ENCODE measurements at regions of chr11 and their contacts with region 1.

Region 1: DNA sequence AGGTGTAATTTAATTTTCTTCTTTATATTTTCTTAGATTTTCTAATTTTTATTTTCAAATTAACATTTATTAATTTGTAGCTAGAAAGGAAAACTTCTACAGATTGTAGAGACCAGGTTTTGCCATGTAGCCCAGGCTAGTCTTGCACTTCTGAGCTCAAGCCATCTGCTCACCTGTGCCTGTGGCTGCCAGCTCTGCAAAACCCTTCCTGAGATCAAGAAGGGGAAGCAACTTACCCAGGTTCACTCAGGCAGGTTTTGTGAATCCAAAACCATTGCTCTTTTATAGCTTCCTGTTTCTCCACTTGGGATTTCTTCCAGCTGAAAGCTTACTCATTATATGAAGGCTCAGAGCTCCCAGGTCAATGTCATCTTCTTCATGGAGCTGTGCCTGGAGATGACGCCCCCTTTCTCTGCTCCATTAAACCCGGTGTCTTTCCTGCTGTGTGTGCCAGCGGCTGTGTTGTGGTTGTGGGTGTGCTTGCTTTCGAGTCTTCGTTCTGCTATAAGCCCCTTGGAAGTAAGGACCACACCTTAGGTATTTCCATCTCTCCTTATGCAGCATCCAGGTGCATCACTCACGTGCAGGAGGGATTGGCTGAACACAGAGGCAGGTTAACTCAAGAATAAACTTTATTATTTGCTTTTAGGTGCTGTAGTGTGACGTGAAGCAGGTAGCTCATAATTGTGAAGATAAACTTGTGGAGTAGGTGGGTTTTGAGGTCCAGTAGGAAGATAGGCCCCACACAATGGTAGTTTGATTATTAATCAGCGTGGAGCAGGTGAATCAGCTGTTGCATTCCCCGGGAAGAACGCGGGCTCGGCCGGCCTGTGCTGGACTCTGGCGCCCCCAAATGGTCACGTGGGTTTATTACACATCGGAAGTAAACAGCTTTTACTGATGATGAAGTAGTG is 42.2 kb upstream of the INCENP start:
- DNase-seq: peak; percentile 83
- ATAC-seq: peak; percentile 85
- H3K4me3 Mint-ChIP-seq: peak overlapping the region; percentile 20
- H3K27ac Mint-ChIP-seq: no peak overlapping the region
- H3K4me1 Mint-ChIP-seq: peaks cover 8% of the 10 kb centered on the region
- H3K27me3 Mint-ChIP-seq: peaks cover 6% of the 10 kb centered on the region

Region 2: DNA sequence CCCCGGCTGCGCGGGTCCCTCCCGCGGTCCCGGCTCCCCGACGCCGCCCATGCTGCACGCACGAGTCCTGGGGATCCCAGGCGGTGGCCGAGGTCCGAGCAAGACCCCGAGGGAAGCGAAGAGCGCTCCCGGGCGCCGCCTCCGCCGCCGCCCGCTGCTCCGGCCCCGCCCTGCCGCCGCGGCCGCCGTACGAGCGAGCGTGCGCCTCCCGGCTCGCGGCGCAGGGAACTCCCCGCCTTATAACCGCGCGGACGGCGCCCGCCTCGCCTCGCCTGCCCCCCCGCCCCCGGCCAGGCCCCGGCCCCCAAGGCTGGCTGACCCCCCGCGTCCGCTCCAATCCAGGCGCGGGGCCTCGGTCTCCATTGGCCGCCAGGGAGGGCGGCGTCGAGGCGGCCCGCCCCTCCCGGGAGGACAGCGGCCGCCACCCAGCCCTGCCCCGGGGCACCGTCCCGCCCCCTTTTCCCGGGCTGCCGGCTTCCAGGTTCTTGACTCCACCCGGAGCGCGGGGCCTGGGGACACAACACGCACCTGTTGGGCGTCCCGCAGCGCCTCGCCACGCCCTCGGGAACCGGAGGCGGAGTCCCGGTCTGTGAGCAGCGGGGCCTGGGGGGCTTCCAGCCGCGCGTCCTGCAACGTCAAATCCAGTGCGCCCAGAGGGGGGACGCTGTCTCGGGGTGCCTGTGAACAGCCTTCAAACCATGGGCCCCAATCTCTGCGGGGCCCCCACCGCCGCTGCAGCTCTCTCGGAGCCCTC is 190.1 kb before region 1 on chr11 and contains the start of gene FADS3:
- CTCF ChIA-PET with region 1: interaction called, 260 read pairs
- DNase-seq: peak; percentile 66
- ATAC-seq: peak; percentile 87
- H3K4me3 Mint-ChIP-seq: peak within 1 kb of the TSS; percentile 77
- H3K27ac Mint-ChIP-seq: no peak within 1 kb of the TSS
- H3K4me1 Mint-ChIP-seq: peaks cover 3% of the 10 kb centered on the region
- H3K27me3 Mint-ChIP-seq: peaks cover 9% of the 10 kb centered on the region
- total RNA-seq, gene FADS3: 2.6 to 7.7 TPM

Region 3: DNA sequence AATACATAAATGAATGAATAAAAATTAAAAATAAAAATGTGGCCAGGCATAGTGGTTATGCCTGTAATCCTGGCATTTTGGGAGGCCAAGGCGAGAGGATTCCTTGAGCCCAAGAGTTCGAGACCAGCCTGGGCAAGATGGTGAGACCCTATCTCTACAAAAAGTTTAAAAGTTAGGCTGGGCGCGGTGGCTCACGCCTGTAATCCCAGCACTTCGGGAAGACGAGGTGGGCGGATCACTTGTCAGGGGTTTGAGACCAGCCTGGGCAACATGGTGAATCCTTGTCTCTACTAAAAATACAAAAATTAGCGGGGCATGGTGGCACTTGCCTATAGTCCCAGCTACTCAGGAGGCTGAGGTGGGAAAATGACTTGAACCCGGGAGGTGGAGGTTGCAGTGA is 141.2 kb before region 1 on chr11:
- CTCF ChIA-PET with region 1: interaction called, 86 read pairs
- DNase-seq: no peak
- ATAC-seq: no peak
- H3K4me3 Mint-ChIP-seq: no peak overlapping the region
- H3K27ac Mint-ChIP-seq: no peak overlapping the region
- H3K4me1 Mint-ChIP-seq: no peaks in the 10 kb centered on the region
- H3K27me3 Mint-ChIP-seq: peaks cover 31% of the 10 kb centered on the region

Region 4: GRCh38 chr11:61967116-61967923 is 114.3 kb before region 1 on chr11 and contains the start of gene FTH1:
- CTCF ChIA-PET with region 1: interaction called, 35 read pairs
- DNase-seq: peak; percentile 91
- ATAC-seq: peak; percentile 79
- H3K4me3 Mint-ChIP-seq: peak within 1 kb of the TSS; percentile 88
- H3K27ac Mint-ChIP-seq: peak within 1 kb of the TSS; percentile 94
- H3K4me1 Mint-ChIP-seq: peaks cover 59% of the 10 kb centered on the region
- H3K27me3 Mint-ChIP-seq: no peaks in the 10 kb centered on the region
- total RNA-seq, gene FTH1: 740 to 867 TPM

Region 5: GRCh38 chr11:62050716-62051115 is 30.9 kb before region 1 on chr11:
- CTCF ChIA-PET with region 1: interaction called, 11 read pairs
- DNase-seq: no peak
- ATAC-seq: no peak
- H3K4me3 Mint-ChIP-seq: no peak overlapping the region
- H3K27ac Mint-ChIP-seq: no peak overlapping the region
- H3K4me1 Mint-ChIP-seq: no peaks in the 10 kb centered on the region
- H3K27me3 Mint-ChIP-seq: peaks cover 5% of the 10 kb centered on the region

Region 6: DNA sequence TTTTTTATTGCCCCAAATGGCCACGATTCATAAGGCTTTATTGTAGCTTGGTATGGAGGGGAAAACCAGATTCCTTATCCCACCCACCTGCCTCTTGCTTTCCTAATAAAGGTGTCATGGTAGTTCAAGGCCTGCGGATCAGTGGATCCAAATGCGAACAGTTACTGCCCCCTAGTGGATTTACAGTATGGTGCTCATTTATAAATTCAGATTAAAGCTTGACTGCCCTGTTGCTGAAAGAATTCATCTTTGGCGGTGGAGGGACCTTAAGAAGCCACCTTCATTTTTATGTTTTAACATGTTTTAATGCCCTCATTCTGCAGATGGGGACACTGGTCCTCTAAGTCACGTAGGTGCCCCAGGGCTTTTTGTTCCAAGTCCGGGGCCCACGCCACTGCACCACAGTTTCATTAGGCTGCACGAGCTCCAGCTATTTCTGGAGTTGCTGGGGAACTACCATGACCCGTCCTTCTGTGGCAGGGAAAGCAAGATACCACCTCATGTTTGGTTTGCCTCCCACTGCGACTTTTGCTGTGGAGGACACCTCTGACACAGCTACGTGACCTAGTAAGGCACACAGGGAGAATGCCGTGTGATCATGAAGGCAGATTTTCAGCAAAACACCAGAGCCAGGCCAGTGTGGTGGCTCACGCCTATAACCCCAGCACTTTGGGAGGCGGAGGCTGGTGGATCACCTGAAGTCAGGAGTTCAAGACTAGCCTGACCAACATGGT is 26.5 kb after region 1 on chr11:
- CTCF ChIA-PET with region 1: interaction called, 94 read pairs
- DNase-seq: peak; percentile 51
- ATAC-seq: no peak
- H3K4me3 Mint-ChIP-seq: no peak overlapping the region
- H3K27ac Mint-ChIP-seq: no peak overlapping the region
- H3K4me1 Mint-ChIP-seq: peaks cover 17% of the 10 kb centered on the region
- H3K27me3 Mint-ChIP-seq: peaks cover 14% of the 10 kb centered on the region

Measured in activated CD8-positive, alpha-beta memory T cell treated with anti-CD3 and anti-CD28 coated beads, Interleukin-2, amount 10 ng/mL, durations not matched to agents 7 days and 5 days (primary cell).